Activated B cell treated with CpG ODN at 0.5 μM for 24 hours (primary cell): ENCODE measurements at regions of chr7 and their contacts with region 1.

Region 1: GRCh38 chr7:10939911-10940703 is 33.6 kb upstream of the PHF14 start:
- DNase-seq: peak; percentile 93
- ATAC-seq: peak; percentile 91
- H3K4me3 Mint-ChIP-seq: no peak overlapping the region
- H3K27ac Mint-ChIP-seq: no peak overlapping the region
- H3K4me1 Mint-ChIP-seq: peaks cover 5% of the 10 kb centered on the region
- H3K27me3 Mint-ChIP-seq: no peaks in the 10 kb centered on the region
- CTCF ChIP-seq: no peak

Region 2: DNA sequence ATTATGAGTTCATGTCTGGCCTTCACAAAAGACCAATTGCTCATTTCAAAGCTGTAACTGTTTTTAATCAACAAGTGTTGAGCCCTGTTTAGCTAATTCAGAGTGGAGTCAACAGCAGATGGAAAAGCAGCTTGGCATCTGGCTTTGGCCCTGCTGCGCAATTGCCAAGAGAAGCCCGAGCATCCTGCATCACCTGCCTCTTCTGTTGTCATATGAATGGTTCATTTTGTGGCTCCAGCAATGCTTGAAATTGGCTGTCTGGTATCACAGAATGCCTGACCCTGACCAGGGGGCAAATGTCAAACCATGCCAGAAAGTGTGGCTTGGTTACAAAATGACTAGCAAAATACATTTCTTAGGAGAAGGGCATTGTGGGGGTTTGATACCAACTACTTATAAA is 262.9 kb before region 1 on chr7:
- CTCF ChIA-PET with region 1: no interaction called
- POLR2A ChIA-PET with region 1: no interaction called
- intact Hi-C with region 1: no loop called
- DNase-seq: no peak
- ATAC-seq: no peak
- H3K4me3 Mint-ChIP-seq: no peak overlapping the region
- H3K27ac Mint-ChIP-seq: no peak overlapping the region
- H3K4me1 Mint-ChIP-seq: no peaks in the 10 kb centered on the region
- H3K27me3 Mint-ChIP-seq: no peaks in the 10 kb centered on the region
- CTCF ChIP-seq: no peak

Region 3: GRCh38 chr7:10973061-10973944 is 33.2 kb after region 1 on chr7 and contains the start of gene PHF14:
- CTCF ChIA-PET with region 1: interaction called, 15 read pairs
- POLR2A ChIA-PET with region 1: interaction called, 102 read pairs
- intact Hi-C with region 1: loop called (anchors 1 kb)
- DNase-seq: peak; percentile 87
- ATAC-seq: peak; percentile 95
- H3K4me3 Mint-ChIP-seq: peak within 1 kb of the TSS; percentile 93
- H3K27ac Mint-ChIP-seq: peak within 1 kb of the TSS; percentile 95
- H3K4me1 Mint-ChIP-seq: peaks cover 45% of the 10 kb centered on the region
- H3K27me3 Mint-ChIP-seq: peaks cover 3% of the 10 kb centered on the region
- CTCF ChIP-seq: no peak
- total RNA-seq, gene PHF14: 33.0 and 38.2 TPM in 2 replicates

Region 4: DNA sequence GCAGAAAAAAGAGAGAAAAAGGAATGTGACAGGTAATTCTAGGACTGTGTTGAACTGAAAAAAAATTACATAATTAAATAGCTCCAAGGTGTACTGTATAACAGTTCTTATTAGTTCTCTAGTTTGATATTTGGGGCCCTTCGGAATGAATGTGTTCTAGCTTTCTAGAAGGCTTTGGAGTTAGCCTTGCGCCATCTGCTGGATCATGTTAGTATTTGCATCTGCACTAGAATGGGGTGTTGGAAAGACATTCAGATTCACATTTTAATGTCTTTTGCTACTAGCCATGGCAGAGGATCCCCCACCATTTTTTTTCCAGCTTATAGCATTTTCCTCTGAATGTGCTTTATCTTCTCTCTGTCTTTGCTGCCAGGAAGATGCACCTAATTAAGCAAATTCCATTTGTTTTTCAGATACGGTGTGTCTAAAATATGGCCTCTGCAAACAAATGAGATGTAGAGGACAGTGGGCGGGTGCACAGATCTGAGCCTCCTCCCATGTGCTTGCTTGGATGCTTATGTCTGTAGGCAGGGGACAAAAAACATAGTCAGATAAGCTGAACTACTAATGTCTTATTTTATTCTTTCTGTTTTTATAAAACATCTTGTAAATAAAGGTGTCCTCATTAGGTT is 272.1 kb after region 1 on chr7:
- CTCF ChIA-PET with region 1: interaction called, 5 read pairs
- POLR2A ChIA-PET with region 1: interaction called, 5 read pairs
- intact Hi-C with region 1: loop called (anchors 1 kb)
- DNase-seq: no peak
- ATAC-seq: peak; percentile 81
- H3K4me3 Mint-ChIP-seq: no peak overlapping the region
- H3K27ac Mint-ChIP-seq: no peak overlapping the region
- H3K4me1 Mint-ChIP-seq: no peaks in the 10 kb centered on the region
- H3K27me3 Mint-ChIP-seq: no peaks in the 10 kb centered on the region
- CTCF ChIP-seq: peak; percentile 49

Region 5: DNA sequence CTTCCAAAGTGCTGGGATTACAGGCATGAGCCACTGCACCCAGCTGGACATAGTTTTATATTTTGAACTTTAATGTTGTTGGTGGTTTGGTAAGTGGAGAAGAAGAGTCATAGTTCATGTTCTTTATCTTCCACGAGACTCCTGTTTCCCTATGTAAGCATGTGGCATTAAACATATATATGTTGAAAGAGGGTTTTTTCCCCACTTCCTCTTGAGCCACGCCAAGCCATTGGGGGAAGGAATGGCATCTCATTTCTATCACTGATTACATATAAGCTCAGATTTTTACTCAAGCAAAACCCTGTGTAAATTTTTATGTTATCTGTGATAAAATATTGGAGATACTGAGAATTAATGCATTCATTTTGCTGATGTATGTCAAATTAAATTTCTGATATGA is 334.0 kb after region 1 on chr7:
- CTCF ChIA-PET with region 1: no interaction called
- POLR2A ChIA-PET with region 1: no interaction called
- intact Hi-C with region 1: no loop called
- DNase-seq: no peak
- ATAC-seq: no peak
- H3K4me3 Mint-ChIP-seq: no peak overlapping the region
- H3K27ac Mint-ChIP-seq: no peak overlapping the region
- H3K4me1 Mint-ChIP-seq: no peaks in the 10 kb centered on the region
- H3K27me3 Mint-ChIP-seq: no peaks in the 10 kb centered on the region
- CTCF ChIP-seq: no peak

Region 6: GRCh38 chr7:12211054-12211710 is 1271.1 kb after region 1 on chr7 and contains the start of gene TMEM106B:
- CTCF ChIA-PET with region 1: no interaction called
- POLR2A ChIA-PET with region 1: interaction called, 7 read pairs
- intact Hi-C with region 1: loop called (anchors 1 kb)
- DNase-seq: peak; percentile 92
- ATAC-seq: peak; percentile 92
- H3K4me3 Mint-ChIP-seq: peak within 1 kb of the TSS; percentile 91
- H3K27ac Mint-ChIP-seq: peak within 1 kb of the TSS; percentile 90
- H3K4me1 Mint-ChIP-seq: peaks cover 21% of the 10 kb centered on the region
- H3K27me3 Mint-ChIP-seq: peaks cover 8% of the 10 kb centered on the region
- CTCF ChIP-seq: no peak
- total RNA-seq, gene TMEM106B: 18.1 and 22.1 TPM in 2 replicates